ENCODE measurements at regions of chr1 and their contacts with region 1.

Region 1: DNA sequence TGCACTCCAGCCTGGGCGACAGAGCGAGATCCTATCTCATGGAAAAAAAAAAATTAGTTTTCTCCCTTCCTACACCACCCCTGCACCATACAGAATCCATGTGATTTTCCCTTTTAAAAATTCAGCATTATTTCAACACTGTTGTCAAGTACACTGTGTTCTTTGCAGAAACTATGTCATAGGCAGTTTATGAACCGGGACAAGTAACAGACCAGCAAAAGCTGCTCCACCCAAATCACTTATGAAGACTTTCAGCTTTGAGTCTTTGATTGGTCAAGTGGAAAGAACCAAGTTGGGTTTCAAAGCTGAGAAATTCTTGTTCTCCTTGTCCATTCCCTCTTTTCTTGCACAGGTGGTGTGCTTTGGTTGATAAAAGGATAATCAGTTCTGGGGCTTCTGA is 173.0 kb downstream of the CDC7 start:
- DNase-seq: no peak
- H3K4me3 Mint-ChIP-seq: no peak overlapping the region
- H3K27ac Mint-ChIP-seq: peak overlapping the region; percentile 73
- H3K4me1 Mint-ChIP-seq: peaks cover 28% of the 10 kb centered on the region
- H3K27me3 Mint-ChIP-seq: no peaks in the 10 kb centered on the region

Region 2: DNA sequence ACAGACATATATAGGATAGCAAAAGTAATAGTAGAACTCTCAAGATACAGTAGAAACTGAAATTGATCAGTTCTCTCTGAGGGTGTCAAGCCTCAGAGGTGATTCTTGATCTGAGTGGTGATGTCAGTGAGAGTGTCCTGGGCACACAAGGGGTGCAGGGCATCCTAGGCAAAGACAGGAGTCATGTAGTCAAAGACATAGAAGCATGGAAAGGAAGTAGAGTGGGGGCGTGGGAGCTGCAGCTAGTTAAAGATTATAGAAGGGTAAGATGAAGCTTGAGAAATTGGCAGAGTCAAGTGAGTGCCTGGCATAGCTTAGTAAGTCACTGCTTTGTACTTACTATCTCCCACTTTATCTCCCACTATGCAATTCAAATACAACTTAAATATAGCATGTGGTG is 150.1 kb before region 1 on chr1:
- CTCF ChIA-PET with region 1: no interaction called
- intact Hi-C with region 1: loop called (anchors 1 kb)
- DNase-seq: peak; percentile 55
- H3K4me3 Mint-ChIP-seq: no peak overlapping the region
- H3K27ac Mint-ChIP-seq: no peak overlapping the region
- H3K4me1 Mint-ChIP-seq: peaks cover 18% of the 10 kb centered on the region
- H3K27me3 Mint-ChIP-seq: no peaks in the 10 kb centered on the region

Region 3: DNA sequence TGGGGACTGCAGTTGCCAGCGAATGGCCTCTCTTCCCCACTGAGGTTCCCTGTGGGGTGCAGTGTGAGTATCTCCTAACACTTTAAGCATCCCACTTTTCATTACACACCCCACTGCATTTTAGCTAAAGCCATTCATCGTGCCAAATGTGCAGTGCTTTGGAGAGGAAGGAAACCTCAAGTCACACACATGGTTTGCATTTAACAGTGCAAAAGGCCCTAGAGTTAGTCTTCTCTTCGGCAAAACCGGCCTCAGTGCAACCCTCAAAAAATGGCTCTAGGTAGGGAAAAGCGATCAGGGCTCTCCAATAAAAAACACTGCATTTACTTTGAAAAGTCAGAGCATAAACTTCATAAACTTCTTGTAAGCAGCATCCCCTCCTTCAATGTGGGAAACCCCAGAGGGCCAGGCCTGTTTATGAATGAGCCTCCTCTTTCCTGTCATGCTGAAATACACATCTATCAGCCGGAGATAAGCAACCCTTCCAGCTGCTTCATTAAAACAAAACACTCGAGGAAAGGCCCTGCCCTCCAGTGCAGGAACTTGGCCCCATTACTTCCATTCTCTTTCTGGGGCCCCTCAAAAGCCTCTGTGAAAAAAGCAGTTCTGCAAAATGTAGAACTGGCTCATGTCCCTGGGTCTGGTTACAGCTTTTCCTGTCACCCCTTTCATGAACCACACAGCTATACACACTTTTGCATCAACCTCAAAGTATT is 11.0 kb after region 1 on chr1:
- CTCF ChIA-PET with region 1: no interaction called
- intact Hi-C with region 1: loop called (anchors 1 kb)
- DNase-seq: peak; percentile 66
- H3K4me3 Mint-ChIP-seq: peak overlapping the region; percentile 40
- H3K27ac Mint-ChIP-seq: peak overlapping the region; percentile 76
- H3K4me1 Mint-ChIP-seq: peaks cover 20% of the 10 kb centered on the region
- H3K27me3 Mint-ChIP-seq: no peaks in the 10 kb centered on the region

Region 4: DNA sequence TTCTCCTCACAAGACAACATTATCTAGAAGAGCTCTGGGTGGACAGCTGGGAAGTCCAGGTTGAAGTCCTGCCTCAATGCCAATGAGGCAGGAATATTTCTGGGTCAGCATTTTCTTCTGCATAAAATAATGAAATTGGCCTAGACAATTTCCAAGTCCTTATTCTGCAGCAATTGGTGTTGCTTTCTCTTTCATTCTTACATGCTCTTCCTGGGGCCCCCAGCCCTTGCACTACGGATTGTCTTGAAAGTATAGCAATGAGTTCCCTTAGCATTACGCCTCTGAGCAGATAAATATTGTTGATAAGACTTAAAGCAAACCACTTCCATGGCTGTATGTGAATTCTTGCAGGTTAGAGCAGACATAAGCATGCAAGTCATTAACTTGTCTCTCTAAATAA is 23.8 kb after region 1 on chr1:
- CTCF ChIA-PET with region 1: interaction called, 3 read pairs
- intact Hi-C with region 1: loop called (anchors 1 kb)
- DNase-seq: peak; percentile 77
- H3K4me3 Mint-ChIP-seq: peak overlapping the region; percentile 30
- H3K27ac Mint-ChIP-seq: peak overlapping the region; percentile 51
- H3K4me1 Mint-ChIP-seq: peaks cover 28% of the 10 kb centered on the region
- H3K27me3 Mint-ChIP-seq: no peaks in the 10 kb centered on the region

Region 5: GRCh38 chr1:91712981-91713841 is 39.6 kb after region 1 on chr1:
- CTCF ChIA-PET with region 1: no interaction called
- intact Hi-C with region 1: loop called (anchors 1 kb)
- DNase-seq: peak; percentile 71
- H3K4me3 Mint-ChIP-seq: no peak overlapping the region
- H3K27ac Mint-ChIP-seq: peak overlapping the region; percentile 73
- H3K4me1 Mint-ChIP-seq: peaks cover 25% of the 10 kb centered on the region
- H3K27me3 Mint-ChIP-seq: no peaks in the 10 kb centered on the region

Region 6: DNA sequence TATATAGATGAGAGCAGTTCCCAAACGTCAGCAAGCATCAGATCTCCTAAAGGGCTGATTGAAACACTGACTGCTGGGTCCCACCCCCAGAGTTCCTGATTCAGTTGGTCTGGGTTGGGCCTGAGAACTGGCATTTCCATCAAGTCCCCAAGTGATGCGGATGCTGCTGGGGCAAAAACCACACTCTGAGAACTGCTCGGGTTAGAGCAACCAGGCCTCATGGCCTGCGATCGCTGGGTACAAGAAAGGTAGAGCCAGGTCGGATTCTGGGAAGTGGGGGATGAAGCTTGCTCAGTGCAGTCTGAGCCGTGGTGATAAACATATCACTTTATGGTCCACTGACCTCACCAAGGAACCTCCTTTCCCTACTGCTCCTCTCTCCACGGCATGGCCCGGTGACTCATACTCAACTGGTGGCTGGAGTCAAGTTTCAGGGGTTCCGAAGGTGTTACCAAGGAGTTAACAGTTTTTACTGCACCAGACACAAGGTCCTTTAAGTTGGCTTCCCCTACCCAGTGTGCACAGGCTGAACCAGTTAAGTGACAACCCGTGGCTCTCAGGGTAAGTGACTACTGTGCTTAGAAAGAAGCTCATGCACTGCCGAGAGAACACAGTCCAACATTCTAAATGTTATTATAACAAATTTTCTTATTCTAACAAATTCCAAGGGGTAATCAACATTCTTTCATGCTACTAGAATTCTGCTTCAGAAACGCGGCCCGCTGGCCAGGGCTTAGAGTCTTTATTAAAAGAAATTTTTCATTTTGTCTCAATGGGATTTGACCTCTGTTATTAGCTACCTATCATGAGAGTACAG is 58.9 kb after region 1 on chr1:
- CTCF ChIA-PET with region 1: no interaction called
- intact Hi-C with region 1: loop called (anchors 1 kb)
- DNase-seq: peak; percentile 24
- H3K4me3 Mint-ChIP-seq: no peak overlapping the region
- H3K27ac Mint-ChIP-seq: peak overlapping the region; percentile 64
- H3K4me1 Mint-ChIP-seq: peaks cover 30% of the 10 kb centered on the region
- H3K27me3 Mint-ChIP-seq: no peaks in the 10 kb centered on the region

Region 7: DNA sequence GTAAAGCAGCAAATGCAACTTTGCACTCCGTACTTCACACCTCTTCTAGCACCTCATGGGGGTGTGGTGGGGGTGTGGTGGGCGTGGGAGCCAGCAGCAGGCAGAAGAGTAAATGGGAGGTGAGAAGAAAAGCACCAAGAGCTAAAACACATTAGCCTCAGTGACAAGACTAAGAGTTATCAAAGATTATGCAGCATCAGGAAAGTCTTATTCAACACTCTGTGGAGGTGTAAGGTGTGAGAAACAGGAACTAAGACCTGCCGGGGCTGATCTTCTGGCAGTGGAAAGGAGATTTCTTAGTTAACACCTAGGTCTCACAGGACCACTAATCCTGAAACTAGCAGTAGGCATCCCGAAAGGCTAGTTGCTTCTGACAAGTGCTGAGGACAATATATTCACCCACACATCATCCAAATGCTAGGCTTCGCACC is 202.4 kb after region 1 on chr1:
- CTCF ChIA-PET with region 1: no interaction called
- intact Hi-C with region 1: loop called (anchors 1 kb)
- DNase-seq: peak; percentile 61
- H3K4me3 Mint-ChIP-seq: no peak overlapping the region
- H3K27ac Mint-ChIP-seq: peak overlapping the region; percentile 5
- H3K4me1 Mint-ChIP-seq: peaks cover 74% of the 10 kb centered on the region
- H3K27me3 Mint-ChIP-seq: no peaks in the 10 kb centered on the region